ENCODE measurements at regions of chr6 and their contacts with region 1.

Region 1: DNA sequence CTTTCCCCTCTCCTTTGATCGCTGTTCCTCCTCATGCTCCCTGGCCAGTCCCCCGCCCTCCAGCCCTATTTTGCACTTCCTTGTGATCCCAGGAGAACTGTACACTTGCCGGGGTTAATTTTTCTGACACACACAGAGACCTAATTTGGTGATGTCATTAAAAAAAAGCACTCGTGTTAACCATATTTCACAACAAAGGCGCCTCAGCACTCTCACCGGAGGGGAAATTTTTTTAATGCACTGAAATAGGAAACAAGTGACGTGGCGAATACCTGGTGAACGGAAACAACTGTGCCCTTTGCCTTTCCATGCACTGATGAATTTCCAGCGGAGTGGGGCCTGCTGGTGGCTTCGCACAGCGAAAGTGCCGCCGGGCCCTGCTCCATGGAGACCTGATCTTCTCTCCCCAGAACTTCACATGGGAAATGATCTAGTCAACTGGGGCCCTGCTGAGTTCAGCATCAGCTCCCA is 53.9 kb upstream of the TAGAP start:
- DNase-seq: peak; percentile 56
- ATAC-seq: peak; percentile 51
- H3K4me3 Mint-ChIP-seq: peak overlapping the region; percentile 81
- H3K27ac Mint-ChIP-seq: peak overlapping the region; percentile 99
- H3K4me1 Mint-ChIP-seq: peaks cover 93% of the 10 kb centered on the region
- H3K27me3 Mint-ChIP-seq: no peaks in the 10 kb centered on the region
- CTCF ChIP-seq: no peak

Region 2: GRCh38 chr6:158357566-158358216 is 741.0 kb before region 1 on chr6:
- CTCF ChIA-PET with region 1: no interaction called
- POLR2A ChIA-PET with region 1: no interaction called
- intact Hi-C with region 1: no loop called
- DNase-seq: no peak
- ATAC-seq: no peak
- H3K4me3 Mint-ChIP-seq: no peak overlapping the region
- H3K27ac Mint-ChIP-seq: no peak overlapping the region
- H3K4me1 Mint-ChIP-seq: peaks cover 23% of the 10 kb centered on the region
- H3K27me3 Mint-ChIP-seq: no peaks in the 10 kb centered on the region
- CTCF ChIP-seq: no peak

Region 3: GRCh38 chr6:159008656-159009288 is 89.9 kb before region 1 on chr6:
- CTCF ChIA-PET with region 1: interaction called, 205 read pairs
- POLR2A ChIA-PET with region 1: interaction called, 123 read pairs
- intact Hi-C with region 1: no loop called
- DNase-seq: no peak
- ATAC-seq: peak; percentile 74
- H3K4me3 Mint-ChIP-seq: peak overlapping the region; percentile 5
- H3K27ac Mint-ChIP-seq: peak overlapping the region; percentile 24
- H3K4me1 Mint-ChIP-seq: peaks cover 41% of the 10 kb centered on the region
- H3K27me3 Mint-ChIP-seq: no peaks in the 10 kb centered on the region
- CTCF ChIP-seq: no peak

Region 4: DNA sequence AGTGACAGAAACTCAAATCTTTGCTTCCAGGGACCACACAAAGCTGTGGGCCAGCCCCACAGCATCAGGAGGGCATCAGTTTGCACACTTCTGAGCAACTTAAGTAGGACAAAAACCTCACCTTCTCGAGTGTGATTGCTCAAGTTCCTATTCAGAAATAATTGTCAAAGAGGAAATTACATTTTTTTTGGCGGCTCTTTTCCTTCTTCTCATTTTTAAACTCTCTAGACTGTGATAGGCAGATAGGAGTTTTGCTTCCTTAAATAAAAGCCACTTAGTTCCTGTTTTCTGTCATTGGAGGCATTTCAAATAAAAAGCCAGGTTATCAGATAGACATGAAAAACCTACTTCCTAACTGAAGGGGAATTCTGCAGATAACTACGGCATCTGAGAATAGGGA is 42.7 kb before region 1 on chr6:
- CTCF ChIA-PET with region 1: interaction called, 10 read pairs
- POLR2A ChIA-PET with region 1: interaction called, 40 read pairs
- intact Hi-C with region 1: no loop called
- DNase-seq: no peak
- ATAC-seq: peak; percentile 68
- H3K4me3 Mint-ChIP-seq: peak overlapping the region; percentile 70
- H3K27ac Mint-ChIP-seq: peak overlapping the region; percentile 88
- H3K4me1 Mint-ChIP-seq: peaks cover 79% of the 10 kb centered on the region
- H3K27me3 Mint-ChIP-seq: no peaks in the 10 kb centered on the region
- CTCF ChIP-seq: no peak

Region 5: DNA sequence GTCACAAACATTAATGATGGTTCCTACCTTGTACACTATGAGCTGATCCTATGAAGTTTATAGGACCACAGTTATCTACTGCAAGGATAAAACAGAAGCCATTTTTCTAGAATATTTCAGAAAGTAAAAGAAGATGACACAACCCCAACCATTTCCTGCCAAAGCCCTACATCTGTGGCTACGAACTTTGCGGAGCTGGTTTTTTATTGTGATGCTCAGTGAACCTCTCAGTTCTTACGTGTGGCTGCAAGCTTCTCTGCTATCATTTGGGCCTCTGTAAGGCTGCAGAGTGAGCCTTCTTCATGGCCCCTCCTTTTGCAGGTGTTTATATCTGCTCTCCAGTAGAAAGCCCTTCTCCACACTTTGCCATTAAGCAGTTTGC is 36.1 kb before region 1 on chr6:
- CTCF ChIA-PET with region 1: interaction called, 10 read pairs
- POLR2A ChIA-PET with region 1: interaction called, 71 read pairs
- intact Hi-C with region 1: loop called (anchors 1 kb)
- DNase-seq: no peak
- ATAC-seq: peak; percentile 87
- H3K4me3 Mint-ChIP-seq: peak overlapping the region; percentile 50
- H3K27ac Mint-ChIP-seq: peak overlapping the region; percentile 95
- H3K4me1 Mint-ChIP-seq: peaks cover 73% of the 10 kb centered on the region
- H3K27me3 Mint-ChIP-seq: no peaks in the 10 kb centered on the region
- CTCF ChIP-seq: no peak

Region 6: DNA sequence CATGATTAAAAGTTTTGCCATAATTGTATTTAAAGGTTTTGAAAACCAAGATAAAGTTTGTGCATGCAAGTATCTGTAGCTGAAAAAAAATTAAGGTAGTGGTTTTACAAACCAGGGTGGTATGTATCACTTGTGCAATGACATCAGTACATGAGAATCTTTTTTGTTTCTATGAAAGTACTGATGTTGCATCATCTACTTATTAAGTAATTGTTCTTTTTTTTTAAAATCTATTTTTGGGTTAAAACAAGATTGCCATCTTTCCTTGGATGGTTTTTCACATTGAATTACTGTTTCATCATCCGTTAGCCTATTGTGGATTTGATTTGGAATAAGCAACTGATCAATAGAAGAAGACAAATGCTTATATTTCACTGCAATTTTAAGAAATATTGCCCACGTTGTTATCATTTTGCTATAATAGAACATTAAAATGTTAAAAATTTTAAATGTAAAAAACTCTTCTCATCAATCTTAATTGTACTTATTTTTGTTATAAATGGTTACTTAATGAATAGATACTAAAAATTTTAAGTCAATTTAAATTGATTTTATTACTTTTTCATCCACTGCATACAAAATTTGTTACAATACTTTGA is 14.1 kb before region 1 on chr6:
- CTCF ChIA-PET with region 1: interaction called, 15 read pairs
- POLR2A ChIA-PET with region 1: interaction called, 153 read pairs
- intact Hi-C with region 1: loop called (anchors 1 kb)
- DNase-seq: no peak
- ATAC-seq: no peak
- H3K4me3 Mint-ChIP-seq: no peak overlapping the region
- H3K27ac Mint-ChIP-seq: no peak overlapping the region
- H3K4me1 Mint-ChIP-seq: peaks cover 30% of the 10 kb centered on the region
- H3K27me3 Mint-ChIP-seq: no peaks in the 10 kb centered on the region
- CTCF ChIP-seq: no peak

Region 7: DNA sequence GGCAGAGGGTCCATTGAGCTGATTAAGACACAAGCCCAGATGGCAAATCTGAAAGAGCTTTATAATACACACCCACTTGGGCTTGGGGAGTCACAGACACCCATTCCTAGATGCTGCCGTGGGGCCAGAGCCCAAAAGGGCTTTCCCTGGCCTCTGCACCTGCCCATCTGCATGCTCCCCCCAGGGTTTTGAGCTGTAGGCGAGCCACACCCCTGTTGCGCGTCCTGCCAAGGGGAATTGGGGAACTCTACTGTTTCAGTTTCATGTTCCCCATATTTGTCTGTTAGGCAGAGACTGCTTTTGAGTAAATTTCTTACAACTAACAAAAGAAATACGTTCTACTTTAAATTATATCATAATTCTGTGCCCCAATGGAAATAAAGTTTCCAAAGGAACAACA is 17.7 kb after region 1 on chr6:
- CTCF ChIA-PET with region 1: interaction called, 26 read pairs
- POLR2A ChIA-PET with region 1: interaction called, 68 read pairs
- intact Hi-C with region 1: loop called (anchors 1 kb)
- DNase-seq: peak; percentile 71
- ATAC-seq: peak; percentile 75
- H3K4me3 Mint-ChIP-seq: peak overlapping the region; percentile 63
- H3K27ac Mint-ChIP-seq: peak overlapping the region; percentile 99
- H3K4me1 Mint-ChIP-seq: peaks cover 86% of the 10 kb centered on the region
- H3K27me3 Mint-ChIP-seq: no peaks in the 10 kb centered on the region
- CTCF ChIP-seq: no peak

Region 8: DNA sequence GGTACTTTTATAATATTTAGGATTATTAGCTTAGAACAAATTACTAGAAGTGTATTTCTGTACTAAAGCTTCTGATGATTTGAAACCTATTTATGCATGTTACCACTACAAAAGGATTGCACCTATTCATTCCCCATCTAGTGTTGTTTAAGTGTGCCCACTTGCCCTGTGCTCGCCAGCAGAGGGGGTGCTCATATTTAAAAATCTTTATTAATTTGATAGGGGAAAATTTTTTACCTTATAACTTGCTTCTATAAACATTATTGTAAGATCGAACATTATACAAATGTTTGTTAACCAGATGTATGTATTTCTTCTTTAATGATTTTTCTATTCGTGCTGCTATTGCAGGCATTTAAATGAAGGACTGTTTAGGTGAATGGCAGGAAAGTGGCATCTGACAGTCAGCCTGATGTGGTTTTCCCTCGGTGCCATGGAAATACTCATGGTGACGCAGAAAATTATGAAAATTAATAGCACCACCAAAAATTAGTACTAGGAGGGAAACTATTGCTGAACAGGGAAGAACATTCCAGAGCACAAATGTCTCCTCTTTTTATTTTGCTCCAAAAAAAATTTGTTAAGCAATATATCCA is 26.4 kb after region 1 on chr6:
- CTCF ChIA-PET with region 1: interaction called, 10 read pairs
- POLR2A ChIA-PET with region 1: interaction called, 52 read pairs
- intact Hi-C with region 1: no loop called
- DNase-seq: no peak
- ATAC-seq: no peak
- H3K4me3 Mint-ChIP-seq: no peak overlapping the region
- H3K27ac Mint-ChIP-seq: no peak overlapping the region
- H3K4me1 Mint-ChIP-seq: peaks cover 69% of the 10 kb centered on the region
- H3K27me3 Mint-ChIP-seq: no peaks in the 10 kb centered on the region
- CTCF ChIP-seq: no peak

Region 9: GRCh38 chr6:159193923-159194322 is 95.3 kb after region 1 on chr6:
- CTCF ChIA-PET with region 1: no interaction called
- POLR2A ChIA-PET with region 1: no interaction called
- intact Hi-C with region 1: no loop called
- DNase-seq: no peak
- ATAC-seq: no peak
- H3K4me3 Mint-ChIP-seq: no peak overlapping the region
- H3K27ac Mint-ChIP-seq: no peak overlapping the region
- H3K4me1 Mint-ChIP-seq: peaks cover 17% of the 10 kb centered on the region
- H3K27me3 Mint-ChIP-seq: peaks cover 3% of the 10 kb centered on the region
- CTCF ChIP-seq: no peak

Region 10: GRCh38 chr6:159595173-159595572 is 496.5 kb after region 1 on chr6:
- CTCF ChIA-PET with region 1: no interaction called
- POLR2A ChIA-PET with region 1: no interaction called
- intact Hi-C with region 1: no loop called
- DNase-seq: no peak
- ATAC-seq: no peak
- H3K4me3 Mint-ChIP-seq: no peak overlapping the region
- H3K27ac Mint-ChIP-seq: no peak overlapping the region
- H3K4me1 Mint-ChIP-seq: no peaks in the 10 kb centered on the region
- H3K27me3 Mint-ChIP-seq: peaks cover 3% of the 10 kb centered on the region
- CTCF ChIP-seq: no peak

Measured in activated B cell treated with CpG ODN at 0.5 μM for 24 hours (primary cell).